Activated B cell treated with CpG ODN at 0.5 μM for 24 hours (primary cell): ENCODE measurements at regions of chr22 and their contacts with region 1.

Region 1: DNA sequence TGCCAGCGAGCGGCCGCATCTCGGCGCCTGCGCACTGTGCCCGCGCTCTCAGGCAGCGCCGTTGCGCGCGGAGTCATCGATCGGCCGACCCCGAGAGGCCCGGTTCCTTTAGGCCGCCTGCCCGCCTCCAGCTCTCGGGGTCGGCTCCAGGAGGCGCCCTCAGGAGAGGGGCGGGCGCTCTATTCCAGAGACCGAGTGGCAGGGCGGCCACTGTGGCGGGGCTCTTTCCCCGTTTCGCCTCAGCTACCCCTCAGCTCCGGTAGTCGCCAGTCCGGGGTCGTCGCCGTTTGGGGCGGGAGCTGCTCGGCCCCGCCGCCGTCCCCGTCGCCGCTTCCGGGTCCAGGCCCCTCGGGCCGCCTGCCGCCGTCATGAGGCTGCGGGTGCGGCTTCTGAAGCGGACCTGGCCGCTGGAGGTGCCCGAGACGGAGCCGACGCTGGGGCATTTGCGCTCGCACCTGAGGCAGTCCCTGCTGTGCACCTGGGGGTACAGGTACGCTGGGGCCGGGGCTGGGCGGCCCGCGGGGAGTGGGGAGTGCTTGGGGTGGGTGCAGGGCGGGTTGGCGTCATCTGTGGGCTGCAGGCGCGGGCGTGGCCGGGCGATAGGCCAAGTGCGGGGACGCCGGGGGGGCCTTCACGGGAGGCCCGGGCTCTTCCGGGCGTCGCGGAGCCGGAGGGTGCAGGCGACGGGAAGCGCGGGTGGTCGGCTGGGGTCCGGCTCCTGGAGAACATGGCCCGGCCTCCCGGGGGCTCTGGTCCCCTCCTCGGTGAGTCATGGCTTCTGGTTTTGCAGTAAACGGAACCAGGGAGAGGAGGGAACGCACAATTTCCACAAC is at the start of gene FBXO7:
- DNase-seq: peak; percentile 92
- ATAC-seq: peak; percentile 84
- H3K4me3 Mint-ChIP-seq: peak within 1 kb of the TSS; percentile 95
- H3K27ac Mint-ChIP-seq: peak within 1 kb of the TSS; percentile 91
- H3K4me1 Mint-ChIP-seq: peaks cover 30% of the 10 kb centered on the region
- H3K27me3 Mint-ChIP-seq: no peaks in the 10 kb centered on the region
- CTCF ChIP-seq: no peak
- total RNA-seq, gene FBXO7: 85.4 and 97.2 TPM in 2 replicates

Region 2: GRCh38 chr22:31970490-31971444 is 504.1 kb before region 1 on chr22:
- CTCF ChIA-PET with region 1: interaction called, 16 read pairs
- POLR2A ChIA-PET with region 1: interaction called, 6 read pairs
- intact Hi-C with region 1: loop called (anchors 2 kb)
- DNase-seq: peak; percentile 86
- ATAC-seq: peak; percentile 95
- H3K4me3 Mint-ChIP-seq: peak overlapping the region; percentile 76
- H3K27ac Mint-ChIP-seq: peak overlapping the region; percentile 65
- H3K4me1 Mint-ChIP-seq: peaks cover 18% of the 10 kb centered on the region
- H3K27me3 Mint-ChIP-seq: no peaks in the 10 kb centered on the region
- CTCF ChIP-seq: peak; percentile 30

Region 3: DNA sequence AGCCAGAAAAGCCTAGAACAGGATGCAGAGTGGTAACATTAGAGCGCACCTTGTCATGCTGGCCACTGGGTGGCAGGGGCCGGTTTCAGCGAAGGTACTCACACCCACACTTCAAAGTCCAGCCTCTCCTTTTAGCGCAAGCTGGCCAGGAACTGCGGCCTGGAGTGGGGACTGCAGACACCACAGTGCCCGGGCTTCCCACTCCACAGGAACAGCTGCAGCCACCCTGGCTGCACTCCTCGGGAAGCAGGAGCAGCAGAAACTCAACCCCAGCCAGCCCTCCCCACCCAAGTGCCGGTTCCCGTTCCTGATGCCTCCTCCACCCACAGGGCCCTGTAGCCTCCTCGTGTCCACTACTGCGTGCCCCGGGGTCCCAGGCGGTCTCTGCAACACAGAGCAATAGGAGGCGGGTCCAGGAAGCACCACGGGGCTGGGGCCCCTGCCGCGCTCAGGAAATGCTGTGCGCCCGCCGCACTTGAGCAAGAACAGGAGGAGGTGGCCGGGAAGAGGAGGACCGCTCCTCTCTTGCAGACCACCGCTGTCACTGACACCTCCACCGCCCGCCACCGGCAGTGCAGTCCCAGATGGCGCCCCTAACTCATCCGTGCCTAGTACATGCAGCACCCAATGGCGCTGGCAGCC is 272.2 kb before region 1 on chr22:
- CTCF ChIA-PET with region 1: no interaction called
- POLR2A ChIA-PET with region 1: interaction called, 3 read pairs
- intact Hi-C with region 1: loop called (anchors 1 kb)
- DNase-seq: no peak
- ATAC-seq: no peak
- H3K4me3 Mint-ChIP-seq: no peak overlapping the region
- H3K27ac Mint-ChIP-seq: no peak overlapping the region
- H3K4me1 Mint-ChIP-seq: no peaks in the 10 kb centered on the region
- H3K27me3 Mint-ChIP-seq: peaks cover 40% of the 10 kb centered on the region
- CTCF ChIP-seq: no peak

Region 4: DNA sequence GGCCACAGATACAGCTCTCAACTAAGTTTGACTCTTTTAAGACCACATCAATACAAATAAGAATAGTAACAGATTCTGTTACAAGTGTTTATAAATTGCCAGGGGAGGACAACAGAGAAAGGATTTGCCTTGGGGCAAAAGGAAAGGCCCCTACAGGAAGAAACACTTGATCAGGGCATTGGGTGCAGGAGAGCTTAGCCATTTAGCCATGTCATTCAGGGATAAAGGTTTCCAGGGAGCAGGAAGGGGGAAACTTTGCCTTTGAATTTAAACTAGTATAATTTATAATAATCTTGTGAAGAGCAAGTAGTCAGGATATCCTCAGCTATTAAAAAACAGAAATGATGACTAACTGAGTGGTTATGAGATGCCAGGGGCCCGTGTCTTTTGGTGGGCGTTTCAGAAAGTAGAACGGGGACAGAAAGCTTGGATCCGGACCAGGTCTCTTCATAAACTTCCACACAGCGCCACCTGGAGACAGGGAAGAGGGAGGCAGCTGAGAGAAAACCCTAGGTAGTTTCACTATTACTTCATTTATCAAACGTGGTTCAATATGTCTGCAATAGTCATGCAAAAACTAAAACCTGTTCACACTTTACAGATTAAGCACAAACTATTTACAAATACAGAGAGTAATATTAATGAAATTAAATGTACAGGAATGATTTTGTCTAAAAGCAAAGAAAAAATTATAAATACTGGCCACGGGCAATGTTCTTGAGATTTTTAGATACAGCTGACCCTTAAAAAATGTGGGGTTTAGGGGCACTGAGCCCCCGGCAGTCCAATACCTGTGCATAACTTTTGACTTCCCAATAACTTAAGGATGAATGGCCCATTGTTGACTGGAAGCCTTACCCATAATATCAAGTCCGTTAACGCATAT is 208.7 kb before region 1 on chr22:
- CTCF ChIA-PET with region 1: interaction called, 5 read pairs
- POLR2A ChIA-PET with region 1: no interaction called
- intact Hi-C with region 1: loop called (anchors 2 kb)
- DNase-seq: no peak
- ATAC-seq: peak; percentile 42
- H3K4me3 Mint-ChIP-seq: no peak overlapping the region
- H3K27ac Mint-ChIP-seq: no peak overlapping the region
- H3K4me1 Mint-ChIP-seq: no peaks in the 10 kb centered on the region
- H3K27me3 Mint-ChIP-seq: peaks cover 4% of the 10 kb centered on the region
- CTCF ChIP-seq: no peak

Region 5: GRCh38 chr22:32411829-32412592 is 62.8 kb before region 1 on chr22 and contains the start of gene RTCB:
- CTCF ChIA-PET with region 1: interaction called, 9 read pairs
- POLR2A ChIA-PET with region 1: interaction called, 21 read pairs
- intact Hi-C with region 1: loop called (anchors 1 kb)
- DNase-seq: peak; percentile 93
- ATAC-seq: peak; percentile 65
- H3K4me3 Mint-ChIP-seq: peak within 1 kb of the TSS; percentile 97
- H3K27ac Mint-ChIP-seq: peak within 1 kb of the TSS; percentile 97
- H3K4me1 Mint-ChIP-seq: peaks cover 56% of the 10 kb centered on the region
- H3K27me3 Mint-ChIP-seq: peaks cover 7% of the 10 kb centered on the region
- CTCF ChIP-seq: no peak
- total RNA-seq, gene RTCB: 112 and 119 TPM in 2 replicates

Region 6: GRCh38 chr22:32493551-32493950 is 18.7 kb after region 1 on chr22:
- CTCF ChIA-PET with region 1: no interaction called
- POLR2A ChIA-PET with region 1: no interaction called
- intact Hi-C with region 1: no loop called
- DNase-seq: no peak
- ATAC-seq: no peak
- H3K4me3 Mint-ChIP-seq: no peak overlapping the region
- H3K27ac Mint-ChIP-seq: no peak overlapping the region
- H3K4me1 Mint-ChIP-seq: no peaks in the 10 kb centered on the region
- H3K27me3 Mint-ChIP-seq: no peaks in the 10 kb centered on the region
- CTCF ChIP-seq: no peak